ENCODE measurements at regions of chr5 and their contacts with region 1.

Region 1: DNA sequence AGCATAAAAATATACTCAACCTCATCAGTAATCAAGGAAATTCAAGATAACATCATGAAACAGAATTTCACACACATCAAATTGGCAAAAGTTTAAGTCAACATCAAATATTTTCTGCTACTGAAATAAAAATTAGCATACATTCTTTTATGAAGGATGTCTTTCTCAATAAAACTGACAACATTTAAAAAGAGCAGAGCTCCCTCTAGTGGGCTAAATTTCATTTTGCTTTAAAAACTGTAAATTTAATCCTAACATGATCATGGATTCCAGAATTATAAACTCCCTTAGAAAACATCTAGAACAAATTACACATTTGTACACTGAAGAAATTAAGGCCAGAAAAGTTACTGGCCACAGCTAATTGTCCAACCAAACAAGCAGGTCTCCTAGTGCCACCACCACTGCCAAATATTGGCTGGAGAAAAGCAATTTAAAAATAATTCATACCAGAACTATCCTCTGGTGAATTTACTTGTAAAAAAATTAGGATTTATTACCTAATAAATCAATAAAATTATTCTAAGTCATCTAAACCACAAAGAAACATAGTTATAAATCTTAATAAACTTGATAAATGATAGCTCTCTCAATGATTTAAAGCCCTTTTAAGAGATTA is 31.2 kb downstream of the DEPDC1B start:
- DNase-seq: peak in 1 of 2 donors; percentile 56
- ATAC-seq: no peak
- H3K4me3 ChIP-seq: no peak overlapping the region
- H3K4me3 Mint-ChIP-seq: no peak overlapping the region
- H3K27ac ChIP-seq: no peak overlapping the region
- H3K27ac Mint-ChIP-seq: no peak overlapping the region
- H3K4me1 ChIP-seq: no peaks in the 10 kb centered on the region
- H3K4me1 Mint-ChIP-seq: no peaks in the 10 kb centered on the region
- H3K27me3 ChIP-seq: no peaks in the 10 kb centered on the region
- H3K27me3 Mint-ChIP-seq: no peaks in the 10 kb centered on the region
- CTCF ChIP-seq: peak; percentile 82

Region 2: GRCh38 chr5:59810041-59810440 is 858.8 kb before region 1 on chr5:
- intact Hi-C with region 1: loop called (anchors 5 kb)
- DNase-seq: peak; percentile 51 to 83
- ATAC-seq: peak; percentile 77 to 86 (median 78)
- H3K4me3 ChIP-seq: no peak overlapping the region
- H3K4me3 Mint-ChIP-seq: no peak overlapping the region
- H3K27ac ChIP-seq: no peak overlapping the region
- H3K27ac Mint-ChIP-seq: no peak overlapping the region
- H3K4me1 ChIP-seq: peaks cover 3% of the 10 kb centered on the region
- H3K4me1 Mint-ChIP-seq: peaks cover 4 to 5% of the 10 kb centered on the region in 2 donors
- H3K27me3 ChIP-seq: peaks cover 3% of the 10 kb centered on the region
- H3K27me3 Mint-ChIP-seq: peaks cover 12 to 21% of the 10 kb centered on the region in 2 donors
- CTCF ChIP-seq: peak; percentile 97